CD4-positive, alpha-beta T cell (primary cell): ENCODE measurements at regions of chr12 and their contacts with region 1.

Region 1: GRCh38 chr12:120041386-120042231 is 52.6 kb downstream of the BICDL1 start:
- DNase-seq: peak; percentile 23 to 79 (median 56)
- ATAC-seq: peak; percentile 92
- H3K4me3 ChIP-seq: no peak overlapping the region
- H3K4me3 Mint-ChIP-seq: peak overlapping the region; percentile 6
- H3K27ac ChIP-seq: no peak overlapping the region
- H3K27ac Mint-ChIP-seq: peak overlapping the region; percentile 87
- H3K4me1 ChIP-seq: peaks cover 13% of the 10 kb centered on the region
- H3K4me1 Mint-ChIP-seq: peaks cover 31% of the 10 kb centered on the region
- H3K27me3 ChIP-seq: no peaks in the 10 kb centered on the region
- H3K27me3 Mint-ChIP-seq: no peaks in the 10 kb centered on the region
- CTCF ChIP-seq: no peak

Region 2: GRCh38 chr12:119949145-119949544 is 92.5 kb before region 1 on chr12:
- CTCF ChIA-PET with region 1: no interaction called
- POLR2A ChIA-PET with region 1: no interaction called
- intact Hi-C with region 1: no loop called
- DNase-seq: no peak
- ATAC-seq: no peak
- H3K4me3 ChIP-seq: no peak overlapping the region
- H3K4me3 Mint-ChIP-seq: no peak overlapping the region
- H3K27ac ChIP-seq: no peak overlapping the region
- H3K27ac Mint-ChIP-seq: no peak overlapping the region
- H3K4me1 ChIP-seq: no peaks in the 10 kb centered on the region
- H3K4me1 Mint-ChIP-seq: no peaks in the 10 kb centered on the region
- H3K27me3 ChIP-seq: no peaks in the 10 kb centered on the region
- H3K27me3 Mint-ChIP-seq: no peaks in the 10 kb centered on the region
- CTCF ChIP-seq: no peak

Region 3: GRCh38 chr12:120012067-120012621 is 29.5 kb before region 1 on chr12:
- CTCF ChIA-PET with region 1: interaction called, 3 read pairs
- POLR2A ChIA-PET with region 1: interaction called, 3 read pairs
- intact Hi-C with region 1: loop called in 1 of 2 experiments (anchors 1 kb)
- DNase-seq: peak; percentile 27 to 98 (median 62)
- ATAC-seq: peak; percentile 57
- H3K4me3 ChIP-seq: peak overlapping the region; percentile 21
- H3K4me3 Mint-ChIP-seq: peak overlapping the region; percentile 76
- H3K27ac ChIP-seq: peak overlapping the region; percentile 86 to 96
- H3K27ac Mint-ChIP-seq: peak overlapping the region; percentile 96
- H3K4me1 ChIP-seq: peaks cover 75% of the 10 kb centered on the region
- H3K4me1 Mint-ChIP-seq: peaks cover 81% of the 10 kb centered on the region
- H3K27me3 ChIP-seq: no peaks in the 10 kb centered on the region
- H3K27me3 Mint-ChIP-seq: no peaks in the 10 kb centered on the region
- CTCF ChIP-seq: no peak

Region 4: GRCh38 chr12:120079411-120080026 is 37.9 kb after region 1 on chr12:
- CTCF ChIA-PET with region 1: no interaction called
- POLR2A ChIA-PET with region 1: no interaction called
- intact Hi-C with region 1: loop called in 1 of 2 experiments (anchors 5 kb)
- DNase-seq: no peak
- ATAC-seq: no peak
- H3K4me3 ChIP-seq: no peak overlapping the region
- H3K4me3 Mint-ChIP-seq: no peak overlapping the region
- H3K27ac ChIP-seq: peak overlapping the region in 1 of 2 donors; percentile 23
- H3K27ac Mint-ChIP-seq: peak overlapping the region; percentile 69
- H3K4me1 ChIP-seq: peaks cover 28% of the 10 kb centered on the region
- H3K4me1 Mint-ChIP-seq: peaks cover 29% of the 10 kb centered on the region
- H3K27me3 ChIP-seq: no peaks in the 10 kb centered on the region
- H3K27me3 Mint-ChIP-seq: no peaks in the 10 kb centered on the region
- CTCF ChIP-seq: no peak

Region 5: GRCh38 chr12:120346681-120347080 is 305.1 kb after region 1 on chr12:
- CTCF ChIA-PET with region 1: no interaction called
- POLR2A ChIA-PET with region 1: no interaction called
- intact Hi-C with region 1: no loop called
- DNase-seq: no peak
- ATAC-seq: no peak
- H3K4me3 ChIP-seq: no peak overlapping the region
- H3K4me3 Mint-ChIP-seq: no peak overlapping the region
- H3K27ac ChIP-seq: no peak overlapping the region
- H3K27ac Mint-ChIP-seq: no peak overlapping the region
- H3K4me1 ChIP-seq: no peaks in the 10 kb centered on the region
- H3K4me1 Mint-ChIP-seq: no peaks in the 10 kb centered on the region
- H3K27me3 ChIP-seq: peaks cover 6 to 8% of the 10 kb centered on the region in 2 experiments
- H3K27me3 Mint-ChIP-seq: peaks cover 4% of the 10 kb centered on the region
- CTCF ChIP-seq: no peak